ENCODE measurements at regions of chr2 and their contacts with region 1.

Region 1: DNA sequence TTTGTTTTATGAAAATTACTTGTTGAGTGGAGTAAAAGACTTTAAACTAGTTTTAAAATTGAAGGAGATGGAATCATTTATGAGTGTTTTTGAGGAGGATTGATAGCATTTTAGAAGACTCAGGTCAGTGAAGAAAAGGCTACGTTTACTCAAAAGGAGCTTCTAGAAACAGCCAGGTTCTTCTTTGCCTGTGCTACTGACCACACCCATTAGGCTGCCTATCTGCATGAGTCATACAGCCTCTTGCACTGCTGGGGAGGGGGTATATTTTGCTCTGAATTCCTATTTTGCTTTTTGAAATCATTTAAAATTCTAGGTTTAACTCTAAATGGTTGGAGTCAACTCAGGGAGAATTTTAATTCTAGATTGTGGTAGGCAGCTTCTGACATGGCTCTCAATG is 22.3 kb downstream of the EFEMP1 start:
- DNase-seq: no peak
- ATAC-seq: no peak

Region 2: GRCh38 chr2:54384301-54385203 is 1516.8 kb before region 1 on chr2:
- intact Hi-C with region 1: loop called (anchors 5 kb)
- DNase-seq: no peak
- ATAC-seq: peak; percentile 60

Region 3: DNA sequence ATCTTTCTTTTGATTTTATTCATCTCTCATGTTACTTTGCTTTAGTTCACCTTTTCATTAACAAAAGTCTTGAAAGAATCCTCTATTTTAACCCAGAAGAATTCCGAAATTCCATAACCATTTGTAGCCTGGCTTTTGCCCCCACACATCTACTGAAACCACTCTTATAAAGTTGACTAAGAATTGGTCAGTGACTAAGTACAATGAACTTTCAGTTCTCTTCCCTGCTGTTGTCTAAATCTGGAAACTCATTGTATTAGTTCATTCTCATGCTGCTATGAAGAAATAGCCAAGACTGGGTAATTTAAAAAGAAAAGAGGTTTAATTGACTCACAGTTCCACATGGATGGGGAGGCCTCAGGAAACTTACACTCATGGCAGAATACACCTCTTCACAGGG is 157.7 kb before region 1 on chr2:
- intact Hi-C with region 1: no loop called
- DNase-seq: no peak
- ATAC-seq: no peak

Region 4: GRCh38 chr2:56047136-56047535 is 145.8 kb after region 1 on chr2:
- intact Hi-C with region 1: no loop called
- DNase-seq: no peak
- ATAC-seq: no peak